ENCODE measurements at regions of chr7 and their contacts with region 1.

Region 1: DNA sequence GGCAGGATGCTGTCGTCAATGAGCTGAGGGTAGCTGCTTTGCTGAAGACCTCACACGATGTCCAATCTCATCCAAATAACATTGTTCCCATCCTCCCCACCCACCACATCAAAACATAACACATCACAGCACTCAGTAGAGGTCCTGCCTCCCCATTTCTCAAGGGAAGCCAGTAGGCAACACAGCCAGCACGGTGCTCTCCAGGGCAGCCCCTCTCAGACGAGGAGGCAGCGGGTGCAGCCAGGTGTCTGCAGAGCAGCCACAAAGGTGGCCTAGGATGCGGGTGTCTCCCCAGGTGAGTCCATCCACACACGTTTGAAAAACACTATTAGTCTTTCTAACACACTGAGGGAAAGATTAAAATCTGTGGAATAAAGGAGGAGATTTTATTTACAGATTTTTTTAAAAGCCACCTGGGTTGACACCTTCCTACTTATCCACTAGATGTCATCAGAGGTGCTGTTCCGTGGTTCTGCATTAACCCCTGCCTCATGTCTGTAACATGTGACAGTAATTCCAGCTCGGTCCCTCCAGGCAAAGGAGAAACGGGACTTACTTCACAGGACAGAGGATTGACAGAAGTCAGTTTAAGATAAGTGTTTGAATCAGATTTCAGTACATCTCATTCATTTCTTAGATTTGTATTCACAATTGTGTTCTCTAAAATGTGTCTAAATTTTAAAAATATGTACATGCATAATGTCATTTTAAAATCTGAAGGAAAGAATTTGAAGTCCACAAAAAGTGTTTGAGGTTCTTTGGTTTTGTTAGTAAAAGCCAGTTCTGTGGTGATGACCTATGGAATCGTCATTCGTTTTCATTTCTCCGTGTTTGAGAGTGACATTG is 68.0 kb downstream of the LANCL2 start:
- DNase-seq: peak in 6 of 14 experiments; percentile 18 to 63 (median 46)
- ATAC-seq: peak; percentile 70
- H3K4me3 ChIP-seq: no peak overlapping the region
- H3K4me3 Mint-ChIP-seq: no peak overlapping the region
- H3K27ac ChIP-seq: no peak overlapping the region
- H3K27ac Mint-ChIP-seq: no peak overlapping the region
- H3K4me1 ChIP-seq: peaks cover 29% of the 10 kb centered on the region
- H3K4me1 Mint-ChIP-seq: peaks cover 32% of the 10 kb centered on the region
- H3K27me3 ChIP-seq: no peaks in the 10 kb centered on the region
- H3K27me3 Mint-ChIP-seq: no peaks in the 10 kb centered on the region
- CTCF ChIP-seq: peak; percentile 80

Region 2: GRCh38 chr7:55223023-55223422 is 210.1 kb before region 1 on chr7:
- CTCF ChIA-PET with region 1: no interaction called
- POLR2A ChIA-PET with region 1: no interaction called
- intact Hi-C with region 1: no loop called
- DNase-seq: no peak
- ATAC-seq: no peak
- H3K4me3 ChIP-seq: no peak overlapping the region
- H3K4me3 Mint-ChIP-seq: no peak overlapping the region
- H3K27ac ChIP-seq: no peak overlapping the region
- H3K27ac Mint-ChIP-seq: no peak overlapping the region
- H3K4me1 ChIP-seq: no peaks in the 10 kb centered on the region
- H3K4me1 Mint-ChIP-seq: no peaks in the 10 kb centered on the region
- H3K27me3 ChIP-seq: peaks cover 0 to 3% of the 10 kb centered on the region in 2 experiments
- H3K27me3 Mint-ChIP-seq: peaks cover 18% of the 10 kb centered on the region
- CTCF ChIP-seq: no peak

Region 3: DNA sequence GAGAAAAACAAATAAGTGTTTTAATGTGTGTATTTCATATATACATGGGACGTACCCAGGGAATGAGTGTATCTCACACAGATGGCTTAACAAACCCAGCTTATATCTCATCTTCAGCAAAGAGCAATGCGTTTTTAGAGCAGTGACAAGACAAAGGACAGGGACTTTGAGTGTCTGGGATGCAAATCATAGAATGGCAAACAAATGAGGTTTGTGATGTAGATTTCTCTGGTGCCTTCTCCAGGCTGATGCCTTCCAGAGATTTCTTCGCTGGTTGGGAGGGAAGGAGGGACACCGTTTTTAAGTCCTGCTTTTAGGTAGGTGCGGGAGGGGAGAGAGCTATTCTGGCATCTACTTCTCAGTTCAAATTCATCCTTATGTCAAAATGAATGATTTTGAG is 51.5 kb before region 1 on chr7:
- CTCF ChIA-PET with region 1: no interaction called
- POLR2A ChIA-PET with region 1: no interaction called
- intact Hi-C with region 1: no loop called
- DNase-seq: no peak
- ATAC-seq: no peak
- H3K4me3 ChIP-seq: no peak overlapping the region
- H3K4me3 Mint-ChIP-seq: no peak overlapping the region
- H3K27ac ChIP-seq: no peak overlapping the region
- H3K27ac Mint-ChIP-seq: no peak overlapping the region
- H3K4me1 ChIP-seq: no peaks in the 10 kb centered on the region
- H3K4me1 Mint-ChIP-seq: no peaks in the 10 kb centered on the region
- H3K27me3 ChIP-seq: no peaks in the 10 kb centered on the region
- H3K27me3 Mint-ChIP-seq: no peaks in the 10 kb centered on the region
- CTCF ChIP-seq: no peak

Region 4: GRCh38 chr7:55469271-55469681 is 36.1 kb after region 1 on chr7:
- CTCF ChIA-PET with region 1: interaction called, 4 read pairs
- POLR2A ChIA-PET with region 1: interaction called, 6 read pairs
- intact Hi-C with region 1: loop called (anchors 2 to 5 kb)
- DNase-seq: peak in 13 of 14 experiments; percentile 25 to 79 (median 46)
- ATAC-seq: peak; percentile 89
- H3K4me3 ChIP-seq: no peak overlapping the region
- H3K4me3 Mint-ChIP-seq: peak overlapping the region; percentile 82
- H3K27ac ChIP-seq: peak overlapping the region; percentile 66 to 79
- H3K27ac Mint-ChIP-seq: peak overlapping the region; percentile 89
- H3K4me1 ChIP-seq: peaks cover 88% of the 10 kb centered on the region
- H3K4me1 Mint-ChIP-seq: peaks cover 76% of the 10 kb centered on the region
- H3K27me3 ChIP-seq: no peaks in the 10 kb centered on the region
- H3K27me3 Mint-ChIP-seq: no peaks in the 10 kb centered on the region
- CTCF ChIP-seq: no peak

Region 5: DNA sequence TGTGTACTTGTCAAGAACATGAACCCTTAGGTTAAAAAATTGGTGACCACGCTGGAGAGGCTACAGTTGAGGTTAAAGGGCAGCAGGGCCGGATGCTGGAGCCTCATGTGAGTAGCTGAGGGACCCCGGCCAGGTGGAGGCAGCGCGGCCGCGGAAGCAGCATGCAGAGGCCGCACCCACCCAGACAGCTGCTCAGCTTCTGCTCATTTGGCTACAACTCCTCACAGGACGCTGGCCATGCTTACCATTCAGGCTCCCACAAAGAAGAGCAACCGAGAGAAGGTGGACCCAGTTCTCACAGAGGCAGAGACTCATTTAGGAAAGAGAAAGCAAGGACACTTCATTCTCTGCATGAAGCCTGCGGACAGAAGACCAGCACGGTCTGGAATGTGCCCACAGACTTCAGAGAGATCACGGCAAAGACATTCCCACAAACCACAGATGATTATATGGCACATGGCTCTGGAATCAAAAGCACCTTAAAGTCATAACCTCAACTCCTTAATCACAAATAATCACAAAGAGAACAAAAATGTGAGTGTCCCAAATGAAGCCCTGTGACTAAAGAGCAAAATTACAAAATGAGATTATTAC is 44.7 kb after region 1 on chr7:
- CTCF ChIA-PET with region 1: no interaction called
- POLR2A ChIA-PET with region 1: no interaction called
- intact Hi-C with region 1: loop called in 1 of 2 experiments (anchors 2 kb)
- DNase-seq: peak in 1 of 14 experiments; percentile 5
- ATAC-seq: no peak
- H3K4me3 ChIP-seq: no peak overlapping the region
- H3K4me3 Mint-ChIP-seq: no peak overlapping the region
- H3K27ac ChIP-seq: no peak overlapping the region
- H3K27ac Mint-ChIP-seq: peak overlapping the region; percentile 94
- H3K4me1 ChIP-seq: peaks cover 76% of the 10 kb centered on the region
- H3K4me1 Mint-ChIP-seq: peaks cover 86% of the 10 kb centered on the region
- H3K27me3 ChIP-seq: no peaks in the 10 kb centered on the region
- H3K27me3 Mint-ChIP-seq: no peaks in the 10 kb centered on the region
- CTCF ChIP-seq: no peak

Region 6: GRCh38 chr7:55509322-55509721 is 76.2 kb after region 1 on chr7:
- CTCF ChIA-PET with region 1: no interaction called
- POLR2A ChIA-PET with region 1: no interaction called
- intact Hi-C with region 1: loop called in 1 of 2 experiments (anchors 10 kb)
- DNase-seq: peak in 2 of 14 experiments; percentile 50 to 58
- ATAC-seq: no peak
- H3K4me3 ChIP-seq: no peak overlapping the region
- H3K4me3 Mint-ChIP-seq: no peak overlapping the region
- H3K27ac ChIP-seq: no peak overlapping the region
- H3K27ac Mint-ChIP-seq: peak overlapping the region; percentile 44
- H3K4me1 ChIP-seq: peaks cover 31% of the 10 kb centered on the region
- H3K4me1 Mint-ChIP-seq: peaks cover 60% of the 10 kb centered on the region
- H3K27me3 ChIP-seq: no peaks in the 10 kb centered on the region
- H3K27me3 Mint-ChIP-seq: no peaks in the 10 kb centered on the region
- CTCF ChIP-seq: no peak

Region 7: GRCh38 chr7:55593515-55594318 is 160.6 kb after region 1 on chr7:
- CTCF ChIA-PET with region 1: no interaction called
- POLR2A ChIA-PET with region 1: interaction called, 3 read pairs
- intact Hi-C with region 1: loop called (anchors 1 kb)
- DNase-seq: peak; percentile 54 to 86 (median 66)
- ATAC-seq: peak; percentile 61
- H3K4me3 ChIP-seq: no peak overlapping the region
- H3K4me3 Mint-ChIP-seq: no peak overlapping the region
- H3K27ac ChIP-seq: no peak overlapping the region
- H3K27ac Mint-ChIP-seq: no peak overlapping the region
- H3K4me1 ChIP-seq: peaks cover 22% of the 10 kb centered on the region
- H3K4me1 Mint-ChIP-seq: peaks cover 16% of the 10 kb centered on the region
- H3K27me3 ChIP-seq: no peaks in the 10 kb centered on the region
- H3K27me3 Mint-ChIP-seq: peaks cover 4% of the 10 kb centered on the region
- CTCF ChIP-seq: peak; percentile 83

Region 8: GRCh38 chr7:55723621-55723941 is 290.4 kb after region 1 on chr7:
- CTCF ChIA-PET with region 1: no interaction called
- POLR2A ChIA-PET with region 1: no interaction called
- intact Hi-C with region 1: loop called in 1 of 2 experiments (anchors 10 kb)
- DNase-seq: no peak
- ATAC-seq: no peak
- H3K4me3 ChIP-seq: no peak overlapping the region
- H3K4me3 Mint-ChIP-seq: no peak overlapping the region
- H3K27ac ChIP-seq: no peak overlapping the region
- H3K27ac Mint-ChIP-seq: no peak overlapping the region
- H3K4me1 ChIP-seq: no peaks in the 10 kb centered on the region
- H3K4me1 Mint-ChIP-seq: no peaks in the 10 kb centered on the region
- H3K27me3 ChIP-seq: no peaks in the 10 kb centered on the region
- H3K27me3 Mint-ChIP-seq: peaks cover 4% of the 10 kb centered on the region
- CTCF ChIP-seq: no peak

Measured in CD4-positive, alpha-beta T cell (primary cell).